ENCODE measurements at regions of chr19 and their contacts with region 1.

Region 1: GRCh38 chr19:4007021-4007835 is at the start of gene PIAS4:
- DNase-seq: peak; percentile 95 to 97
- ATAC-seq: peak; percentile 94 to 97 (median 96)
- H3K4me3 ChIP-seq: peak within 1 kb of the TSS; percentile 76 to 99 (median 90)
- H3K27ac ChIP-seq: peak within 1 kb of the TSS; percentile 81 to 95 (median 90)
- H3K4me1 ChIP-seq: peaks cover 31 to 47% (median 41%) of the 10 kb centered on the region in 9 donors
- H3K27me3 ChIP-seq: no peaks in the 10 kb centered on the region
- CTCF ChIP-seq: peak in 2 of 9 donors; percentile 8 to 13
- total RNA-seq, gene PIAS4: 11.5 to 22.8 (median 14.3) TPM

Region 2: GRCh38 chr19:4065430-4066175 is 58.4 kb after region 1 on chr19:
- intact Hi-C with region 1: loop called in 2 of 10 experiments (anchors 5 to 10 kb)
- DNase-seq: peak; percentile 95 to 97
- ATAC-seq: peak; percentile 78 to 88 (median 84)
- H3K4me3 ChIP-seq: peak overlapping the region in 9 of 10 donors; percentile 79 to 99 (median 96)
- H3K27ac ChIP-seq: peak overlapping the region; percentile 98 to 100 (median 99)
- H3K4me1 ChIP-seq: peaks cover 33 to 62% (median 53%) of the 10 kb centered on the region in 9 donors
- H3K27me3 ChIP-seq: no peaks in the 10 kb centered on the region
- CTCF ChIP-seq: peak in 1 of 9 donors; percentile 20

Measured in heart right ventricle (tissue), 16 donors.